ENCODE measurements at regions of chr6 and their contacts with region 1.

Region 1: GRCh38 chr6:106979427-106979884 is 4.9 kb upstream of the CD24 start:
- DNase-seq: peak; percentile 82 to 90 (median 84)
- ATAC-seq: peak; percentile 80
- H3K4me3 ChIP-seq: no peak overlapping the region
- H3K27ac ChIP-seq: no peak overlapping the region
- H3K4me1 ChIP-seq: peaks cover 0 to 12% of the 10 kb centered on the region in 2 experiments; a peak in 2 of 5 replicates
- H3K27me3 ChIP-seq: no peaks in the 10 kb centered on the region; a peak in 1 of 5 replicates
- CTCF ChIP-seq: peak; percentile 93 to 96 (median 96)
- EP300 ChIP-seq: no peak
- POLR2A ChIP-seq: no peak
- RAD21 ChIP-seq: peak; percentile 97 to 98

Region 2: DNA sequence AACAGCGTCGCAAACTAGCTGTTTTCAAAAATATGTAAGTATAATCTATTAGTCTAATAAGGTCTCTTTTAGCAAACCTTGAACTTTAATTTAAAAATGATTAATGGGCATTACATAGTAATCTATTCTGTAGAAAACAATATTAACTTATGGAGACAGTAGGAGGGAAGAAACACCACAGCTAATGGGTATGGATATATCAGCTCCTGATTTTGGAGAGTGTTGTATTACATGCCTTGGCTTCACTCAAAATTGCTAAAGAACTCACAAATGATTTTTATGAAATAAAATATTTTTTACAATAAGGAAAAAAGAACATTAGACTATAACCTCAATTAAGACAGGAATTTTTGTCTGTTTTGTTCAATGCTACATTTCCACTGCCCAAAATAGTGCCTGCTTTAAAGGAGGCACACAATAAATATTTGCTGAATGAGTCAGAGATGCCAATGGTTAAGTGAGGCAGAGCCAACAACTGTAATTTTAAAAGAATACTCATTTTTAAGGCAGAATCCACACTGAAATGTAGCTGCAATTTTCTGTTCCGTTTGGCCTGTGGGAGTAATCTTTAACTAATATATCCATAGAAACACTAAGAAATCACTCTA is 669.6 kb before region 1 on chr6:
- CTCF ChIA-PET with region 1: no interaction called
- POLR2A ChIA-PET with region 1: no interaction called
- in situ Hi-C with region 1: no loop called
- intact Hi-C with region 1: no loop called
- DNase-seq: no peak
- ATAC-seq: no peak
- H3K4me3 ChIP-seq: no peak overlapping the region
- H3K27ac ChIP-seq: no peak overlapping the region
- H3K4me1 ChIP-seq: peaks cover 14 to 39% of the 10 kb centered on the region in 2 experiments
- H3K27me3 ChIP-seq: no peaks in the 10 kb centered on the region
- CTCF ChIP-seq: no peak
- EP300 ChIP-seq: no peak
- POLR2A ChIP-seq: no peak
- RAD21 ChIP-seq: no peak

Region 3: GRCh38 chr6:106339334-106340029 is 640.0 kb before region 1 on chr6:
- CTCF ChIA-PET with region 1: interaction called, 3 read pairs
- POLR2A ChIA-PET with region 1: interaction called, 3 read pairs
- in situ Hi-C with region 1: no loop called
- intact Hi-C with region 1: loop called (anchors 2 kb)
- DNase-seq: peak; percentile 58 to 82 (median 67)
- ATAC-seq: peak; percentile 98
- H3K4me3 ChIP-seq: no peak overlapping the region
- H3K27ac ChIP-seq: no peak overlapping the region
- H3K4me1 ChIP-seq: no peaks in the 10 kb centered on the region; a peak in 1 of 5 replicates
- H3K27me3 ChIP-seq: peaks cover 0 to 5% of the 10 kb centered on the region in 2 experiments; a peak in 2 of 5 replicates
- CTCF ChIP-seq: peak; percentile 73 to 84 (median 81)
- EP300 ChIP-seq: no peak
- POLR2A ChIP-seq: no peak
- RAD21 ChIP-seq: peak; percentile 35 to 71; a peak in 3 of 4 replicates

Region 4: GRCh38 chr6:106556368-106556960 is 423.0 kb before region 1 on chr6:
- CTCF ChIA-PET with region 1: no interaction called
- POLR2A ChIA-PET with region 1: no interaction called
- in situ Hi-C with region 1: loop called (anchors 25 kb)
- intact Hi-C with region 1: no loop called
- DNase-seq: no peak
- ATAC-seq: no peak
- H3K4me3 ChIP-seq: no peak overlapping the region
- H3K27ac ChIP-seq: no peak overlapping the region
- H3K4me1 ChIP-seq: no peaks in the 10 kb centered on the region
- H3K27me3 ChIP-seq: peaks cover 9 to 19% of the 10 kb centered on the region in 2 experiments; a peak in 3 of 5 replicates
- CTCF ChIP-seq: peak in 1 of 3 experiments; percentile 56; a peak in 2 of 6 replicates
- EP300 ChIP-seq: no peak
- POLR2A ChIP-seq: no peak
- RAD21 ChIP-seq: peak; percentile 39 to 66; a peak in 3 of 4 replicates

Region 5: DNA sequence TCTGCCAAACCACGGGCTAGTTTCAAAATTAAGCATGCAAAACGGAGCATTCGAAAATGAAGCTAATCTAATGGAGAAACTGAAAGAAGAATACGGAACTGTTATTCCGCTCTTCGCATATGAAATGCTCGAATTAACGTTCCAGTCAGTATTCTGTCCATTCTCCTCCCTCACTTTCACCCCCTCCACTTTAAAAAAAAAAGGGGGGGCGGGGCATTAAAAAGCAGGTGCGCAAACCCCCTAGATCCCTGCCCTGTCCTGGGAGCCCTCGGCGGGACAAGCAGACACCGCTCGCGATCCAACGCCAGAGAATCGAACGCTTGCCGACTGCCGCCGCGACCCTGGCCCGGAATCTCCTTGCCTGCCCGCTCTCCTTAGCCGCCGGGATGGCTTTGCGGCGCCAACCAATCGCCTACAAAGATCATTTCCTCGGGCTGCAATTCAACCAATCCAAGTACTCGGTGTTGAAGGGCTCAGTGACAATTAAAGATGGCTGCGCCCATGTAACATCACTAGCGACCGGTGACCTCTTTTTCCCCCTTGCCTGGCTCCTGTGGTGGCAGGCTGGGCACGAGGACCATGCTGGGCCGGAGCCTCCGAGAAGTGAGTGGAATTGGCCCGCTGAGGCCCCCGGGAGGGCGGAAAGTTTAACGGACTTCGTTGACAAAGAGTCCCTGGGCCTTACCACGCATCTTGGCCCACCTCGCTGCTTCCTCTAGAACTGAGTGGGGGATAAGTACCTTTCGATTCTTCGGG is 350.2 kb before region 1 on chr6 and contains the starts of genes QRSL1 and RTN4IP1:
- CTCF ChIA-PET with region 1: no interaction called
- POLR2A ChIA-PET with region 1: no interaction called
- in situ Hi-C with region 1: no loop called
- intact Hi-C with region 1: loop called (anchors 5 kb)
- DNase-seq: peak; percentile 93 to 99 (median 98)
- ATAC-seq: peak; percentile 93
- H3K4me3 ChIP-seq: peak within 1 kb of the TSS; percentile 79
- H3K27ac ChIP-seq: peak within 1 kb of the TSS; percentile 81
- H3K4me1 ChIP-seq: peaks cover 3 to 6% of the 10 kb centered on the region in 2 experiments; a peak in 1 of 5 replicates
- H3K27me3 ChIP-seq: no peaks in the 10 kb centered on the region
- CTCF ChIP-seq: no peak
- EP300 ChIP-seq: no peak
- POLR2A ChIP-seq: peak; percentile 82
- RAD21 ChIP-seq: no peak
- polyA plus RNA-seq, gene QRSL1: 15.3 to 31.5 TPM
- polyA plus RNA-seq, gene RTN4IP1: 35.1 to 46.0 TPM

Region 6: DNA sequence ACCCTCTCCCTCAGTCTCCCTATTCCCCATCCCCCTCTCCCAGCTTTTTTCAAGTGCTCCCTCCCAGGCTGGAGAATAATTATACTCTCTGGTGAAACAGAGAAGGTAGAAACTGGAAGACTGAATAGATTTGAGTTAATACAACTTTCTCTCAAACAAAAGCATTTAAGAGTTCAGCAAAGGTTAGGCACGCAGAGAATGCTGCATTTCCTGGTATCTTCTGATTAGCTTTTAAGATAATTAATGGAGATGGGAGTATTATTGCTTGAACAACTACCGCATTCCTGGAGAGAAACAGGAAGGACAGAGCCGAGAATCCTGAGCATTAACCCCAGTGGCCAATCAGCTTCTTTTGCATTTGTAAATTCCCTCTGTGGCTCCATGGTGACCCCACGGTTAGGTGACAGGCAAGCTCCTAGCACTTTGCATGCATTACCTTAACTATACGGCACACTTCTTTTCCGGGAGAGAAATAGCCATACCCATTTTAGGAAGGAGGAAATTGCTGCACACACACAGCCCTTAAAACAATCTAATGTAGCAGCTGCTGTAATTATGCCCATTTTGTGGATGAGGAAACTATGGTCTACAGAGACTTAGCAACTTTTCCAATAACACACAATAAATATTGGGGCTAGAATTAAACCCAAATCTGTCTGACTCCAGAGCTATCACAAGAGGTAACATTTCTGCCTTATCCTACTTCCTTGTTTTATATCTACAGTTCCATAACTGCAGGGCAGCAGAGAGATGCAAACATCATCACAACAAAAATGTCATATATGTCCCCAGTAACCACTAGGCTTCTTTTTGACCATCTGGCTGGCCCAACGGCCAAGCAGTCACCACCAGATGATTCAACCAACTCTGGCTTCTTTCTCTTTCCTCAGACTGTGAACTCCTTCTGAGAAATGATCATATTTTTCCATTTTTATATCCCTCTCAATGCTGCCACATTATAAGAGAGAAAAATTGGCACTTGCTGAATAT is 174.8 kb before region 1 on chr6:
- CTCF ChIA-PET with region 1: no interaction called
- POLR2A ChIA-PET with region 1: no interaction called
- in situ Hi-C with region 1: no loop called
- intact Hi-C with region 1: loop called (anchors 5 kb)
- DNase-seq: no peak
- ATAC-seq: no peak
- H3K4me3 ChIP-seq: no peak overlapping the region
- H3K27ac ChIP-seq: no peak overlapping the region
- H3K4me1 ChIP-seq: peaks cover 4 to 10% of the 10 kb centered on the region in 2 experiments; a peak in 4 of 5 replicates
- H3K27me3 ChIP-seq: no peaks in the 10 kb centered on the region
- CTCF ChIP-seq: no peak
- EP300 ChIP-seq: no peak
- POLR2A ChIP-seq: no peak
- RAD21 ChIP-seq: no peak

Region 7: DNA sequence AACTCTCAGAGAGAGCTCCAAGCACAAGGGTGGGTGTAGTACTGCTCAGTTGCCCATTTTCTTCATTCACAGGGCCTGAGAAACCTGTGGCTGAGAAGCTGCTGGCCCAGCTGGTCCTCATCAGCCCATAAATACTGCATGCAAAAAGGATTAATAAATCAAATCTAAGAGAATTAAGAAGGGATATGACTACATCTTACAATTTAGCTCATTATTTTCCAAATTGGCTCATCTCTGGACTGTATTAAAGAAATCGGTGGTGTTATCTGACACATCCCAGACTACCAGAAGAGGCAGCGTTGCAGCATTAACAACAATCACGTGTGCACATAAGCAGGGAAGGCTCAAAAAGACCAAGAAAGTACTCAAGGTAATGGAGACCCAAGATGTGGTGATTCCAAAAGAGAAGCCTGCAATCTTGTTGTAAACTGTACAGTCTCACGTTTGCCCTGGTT is 95.6 kb before region 1 on chr6:
- CTCF ChIA-PET with region 1: no interaction called
- POLR2A ChIA-PET with region 1: no interaction called
- in situ Hi-C with region 1: no loop called
- intact Hi-C with region 1: loop called (anchors 2 kb)
- DNase-seq: peak in 2 of 4 experiments; percentile 45 to 72
- ATAC-seq: peak; percentile 77
- H3K4me3 ChIP-seq: no peak overlapping the region
- H3K27ac ChIP-seq: peak overlapping the region; percentile 49; the same call in 2 of the 3 replicates
- H3K4me1 ChIP-seq: peaks cover 5 to 38% of the 10 kb centered on the region in 2 experiments
- H3K27me3 ChIP-seq: no peaks in the 10 kb centered on the region; a peak in 1 of 5 replicates
- CTCF ChIP-seq: peak; percentile 8 to 47 (median 29); a peak in 2 of 6 replicates
- EP300 ChIP-seq: no peak
- POLR2A ChIP-seq: no peak
- RAD21 ChIP-seq: peak in 1 of 2 experiments; percentile 53; a peak in 1 of 4 replicates

Measured in K562 (cell line).